HAP-1 (cell line): ENCODE measurements at regions of chr12 and their contacts with region 1.

Region 1: DNA sequence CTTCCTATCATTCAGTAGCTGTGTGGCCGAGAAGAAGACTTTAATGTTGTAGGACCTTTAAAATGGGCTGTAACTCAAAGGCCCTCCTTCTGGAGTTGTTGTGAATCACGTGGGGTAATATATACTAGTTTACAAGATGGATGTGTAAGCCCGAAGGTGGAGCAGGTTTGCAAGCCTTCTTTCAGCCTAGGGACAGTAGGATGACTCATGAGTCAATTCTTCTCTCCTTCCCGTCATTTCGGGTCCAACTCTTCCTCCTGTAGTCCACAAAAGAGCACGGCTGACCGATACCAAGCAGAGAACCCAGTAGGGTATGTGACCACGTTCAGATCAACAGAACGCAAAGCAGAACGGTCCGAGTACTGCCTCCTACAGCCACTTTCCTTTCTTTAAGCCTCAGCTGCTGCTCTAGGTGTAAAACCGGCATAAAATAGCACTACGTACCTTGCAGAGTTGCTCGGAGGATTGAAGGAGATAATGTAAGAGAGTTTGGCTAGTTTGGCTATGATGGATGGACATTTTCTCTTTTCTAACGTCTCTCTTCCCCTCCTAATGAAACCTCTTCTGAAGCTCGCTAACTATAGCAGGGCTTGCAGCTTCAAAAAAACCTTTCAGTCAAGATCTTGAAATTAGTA is 1.3 kb upstream of the RASSF3 start:
- DNase-seq: peak; percentile 52 to 58
- H3K4me3 ChIP-seq: peak overlapping the region; percentile 55
- H3K4me1 ChIP-seq: peaks cover 21% of the 10 kb centered on the region
- H3K27me3 ChIP-seq: no peaks in the 10 kb centered on the region

Region 2: DNA sequence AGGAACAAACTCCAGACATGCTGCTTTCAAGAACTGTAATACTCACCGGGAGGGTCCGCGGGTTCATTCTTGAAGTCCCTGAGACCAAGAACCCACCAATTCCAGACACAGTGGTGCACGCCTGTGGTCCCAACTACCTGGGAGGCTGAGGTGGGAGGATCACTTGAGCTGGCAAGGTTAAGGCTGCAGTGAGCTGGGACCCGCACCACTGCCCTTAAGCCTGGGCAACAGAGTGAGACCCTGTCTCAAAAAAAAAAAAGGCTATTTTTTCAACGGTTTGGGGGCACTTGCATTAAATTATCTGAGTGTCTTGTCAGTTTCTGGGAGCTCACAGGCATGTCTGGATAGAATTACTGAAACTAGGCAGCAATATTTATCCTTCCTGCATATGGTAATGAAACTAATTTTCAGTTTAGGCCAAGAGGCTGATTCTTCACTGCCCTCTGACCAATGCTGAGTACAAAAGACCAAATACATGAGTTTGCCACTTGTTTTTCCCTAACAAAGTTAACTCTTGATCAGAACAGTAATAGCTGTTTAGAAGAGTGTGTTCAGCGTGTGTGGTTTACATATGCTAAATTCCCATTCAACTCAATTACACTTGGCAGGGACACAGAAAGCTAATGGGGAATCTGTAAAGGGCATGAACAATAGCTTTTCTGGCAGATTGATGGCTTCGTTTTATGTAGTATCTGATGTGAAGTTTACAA is 64.5 kb before region 1 on chr12:
- in situ Hi-C with region 1: loop called (anchors 5 kb)
- DNase-seq: peak; percentile 70 to 100
- H3K4me3 ChIP-seq: no peak overlapping the region
- H3K4me1 ChIP-seq: peaks cover 17% of the 10 kb centered on the region
- H3K27me3 ChIP-seq: no peaks in the 10 kb centered on the region

Region 3: DNA sequence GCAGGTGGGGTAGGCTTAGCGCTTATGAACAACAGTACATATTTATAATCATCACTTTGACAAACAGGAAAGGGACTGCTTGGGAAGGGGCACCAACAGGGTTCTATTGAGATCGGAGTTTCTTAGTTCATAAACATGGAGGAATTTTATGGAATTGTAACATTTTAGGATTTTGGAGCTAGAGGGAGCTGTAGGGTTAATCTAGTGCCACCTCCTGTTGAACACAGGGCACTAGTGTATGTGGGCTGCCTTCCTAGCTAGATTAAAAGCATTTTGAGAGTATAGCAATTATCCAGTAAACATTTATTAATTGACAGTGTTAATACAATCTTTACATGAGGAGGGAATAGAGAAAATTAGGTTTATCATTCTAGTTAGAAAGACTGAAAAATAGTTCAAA is 192.4 kb after region 1 on chr12:
- in situ Hi-C with region 1: no loop called
- DNase-seq: no peak
- H3K4me3 ChIP-seq: no peak overlapping the region
- H3K4me1 ChIP-seq: no peaks in the 10 kb centered on the region
- H3K27me3 ChIP-seq: no peaks in the 10 kb centered on the region